ENCODE measurements at regions of chr1 and their contacts with region 1.

Region 1: GRCh38 chr1:82632155-82632554 is 831.4 kb downstream of the ADGRL2 start:
- DNase-seq: no peak
- H3K4me3 ChIP-seq: no peak overlapping the region
- H3K27ac ChIP-seq: no peak overlapping the region
- H3K4me1 ChIP-seq: no peaks in the 10 kb centered on the region
- H3K27me3 ChIP-seq: no peaks in the 10 kb centered on the region
- CTCF ChIP-seq: no peak
- EP300 ChIP-seq: no peak
- POLR2A ChIP-seq: no peak

Region 2: GRCh38 chr1:82614090-82614489 is 18.1 kb before region 1 on chr1:
- intact Hi-C with region 1: loop called in 1 of 4 experiments (anchors 2 kb)
- DNase-seq: no peak
- H3K4me3 ChIP-seq: no peak overlapping the region
- H3K27ac ChIP-seq: no peak overlapping the region
- H3K4me1 ChIP-seq: no peaks in the 10 kb centered on the region
- H3K27me3 ChIP-seq: no peaks in the 10 kb centered on the region
- CTCF ChIP-seq: no peak
- EP300 ChIP-seq: no peak
- POLR2A ChIP-seq: no peak

Measured in ovary (tissue), 10 donors.